H1 (cell line): ENCODE measurements at regions of chr17 and their contacts with region 1.

Region 1: GRCh38 chr17:78708510-78708973 is 73.5 kb downstream of the CYTH1 start:
- DNase-seq: peak; percentile 59 to 72
- H3K4me3 ChIP-seq: no peak overlapping the region
- H3K27ac ChIP-seq: no peak overlapping the region
- H3K4me1 ChIP-seq: no peaks in the 10 kb centered on the region
- H3K27me3 ChIP-seq: no peaks in the 10 kb centered on the region
- CTCF ChIP-seq: peak; percentile 92 to 96 (median 92)
- EP300 ChIP-seq: no peak
- POLR2A ChIP-seq: no peak
- RAD21 ChIP-seq: peak; percentile 98 to 99

Region 2: DNA sequence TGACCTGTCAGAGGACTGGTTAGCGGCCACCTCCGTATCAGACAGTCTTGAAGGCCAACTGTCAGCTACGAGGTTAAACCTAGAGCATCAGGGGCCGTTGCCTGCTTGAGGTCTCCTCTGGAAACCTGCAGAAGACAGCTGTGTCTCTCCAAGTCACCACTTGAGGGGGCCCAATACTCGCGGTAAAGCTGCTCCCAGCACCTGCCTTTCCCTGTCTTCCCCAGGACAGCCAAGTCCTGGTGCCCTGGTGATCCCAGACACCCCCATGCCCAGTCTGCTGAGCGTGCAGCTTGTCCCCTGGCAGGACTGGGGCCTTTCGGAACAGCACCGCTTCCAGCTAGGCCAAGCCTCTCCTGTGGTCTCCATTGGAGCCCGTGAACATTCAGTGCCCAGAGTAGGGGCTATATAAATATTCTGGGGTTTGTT is 211.4 kb before region 1 on chr17:
- CTCF ChIA-PET with region 1: interaction called, 92 read pairs
- POLR2A ChIA-PET with region 1: no interaction called
- DNase-seq: peak; percentile 57 to 85
- H3K4me3 ChIP-seq: no peak overlapping the region
- H3K27ac ChIP-seq: no peak overlapping the region
- H3K4me1 ChIP-seq: peaks cover 0 to 11% (median 9%) of the 10 kb centered on the region in 4 experiments; a peak in 6 of 7 replicates
- H3K27me3 ChIP-seq: no peaks in the 10 kb centered on the region; a peak in 2 of 7 replicates
- CTCF ChIP-seq: peak; percentile 80 to 95 (median 91)
- EP300 ChIP-seq: no peak
- POLR2A ChIP-seq: no peak
- RAD21 ChIP-seq: peak; percentile 99 to 100

Region 3: DNA sequence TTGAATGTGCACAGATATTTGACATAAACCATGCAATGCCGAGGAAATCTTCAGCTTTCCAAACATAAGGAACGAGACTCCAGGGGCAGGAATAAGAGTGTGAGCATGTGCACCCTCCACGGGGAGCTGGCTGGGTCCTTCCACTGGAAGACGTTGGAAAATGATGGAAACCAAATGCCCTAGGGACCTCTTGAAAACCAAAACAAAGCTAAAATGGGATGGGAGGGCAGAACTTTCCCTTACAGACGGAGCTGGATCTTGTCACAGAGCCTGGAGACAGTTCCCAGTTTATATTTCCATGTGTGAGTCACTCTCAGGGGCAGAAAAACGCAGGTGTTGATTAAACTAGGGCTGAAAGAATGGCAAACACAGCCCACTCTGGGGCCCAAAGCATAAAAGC is 96.9 kb before region 1 on chr17:
- CTCF ChIA-PET with region 1: interaction called, 26 read pairs
- POLR2A ChIA-PET with region 1: no interaction called
- DNase-seq: no peak
- H3K4me3 ChIP-seq: no peak overlapping the region
- H3K27ac ChIP-seq: no peak overlapping the region
- H3K4me1 ChIP-seq: peaks cover 0 to 6% (median 0%) of the 10 kb centered on the region in 4 experiments; a peak in 2 of 7 replicates
- H3K27me3 ChIP-seq: peaks cover 0 to 10% (median 8%) of the 10 kb centered on the region in 4 experiments; a peak in 5 of 7 replicates
- CTCF ChIP-seq: no peak
- EP300 ChIP-seq: no peak
- POLR2A ChIP-seq: no peak
- RAD21 ChIP-seq: no peak

Region 4: DNA sequence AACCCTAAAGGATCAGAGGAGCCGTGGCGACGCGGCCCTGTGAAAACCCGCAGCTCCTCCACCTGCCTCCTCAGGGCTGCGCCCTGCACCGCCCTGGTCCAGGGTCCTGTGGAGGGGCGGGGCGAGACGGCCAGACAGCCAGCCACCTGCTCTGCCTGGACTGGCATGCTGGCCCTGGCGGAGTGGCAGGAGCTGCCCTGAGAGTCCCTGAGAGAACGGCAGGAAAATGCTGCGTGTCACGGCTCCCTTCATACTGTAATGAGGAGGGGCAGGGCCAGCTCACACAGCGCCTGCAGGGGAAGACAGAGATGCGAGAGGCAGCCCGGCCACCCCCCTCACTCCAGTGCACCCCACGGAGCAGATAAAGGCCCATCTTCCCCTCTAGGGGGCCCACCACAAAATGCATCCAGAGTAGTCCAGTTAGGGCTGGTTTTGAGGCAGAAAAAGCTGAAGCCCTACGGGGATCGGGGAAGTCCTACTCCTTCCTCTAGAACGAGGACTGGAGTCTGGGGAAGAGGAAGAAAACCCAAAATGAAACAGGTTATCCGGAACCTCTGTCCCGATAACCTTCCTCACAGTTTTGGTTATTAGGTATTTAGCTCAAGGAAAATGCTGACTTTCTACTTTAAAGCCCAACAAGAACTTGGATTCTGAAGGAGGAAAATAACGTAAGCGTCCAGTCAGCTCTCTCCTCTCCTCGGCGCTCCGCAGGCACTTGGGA is 33.8 kb before region 1 on chr17:
- CTCF ChIA-PET with region 1: interaction called, 24 read pairs
- POLR2A ChIA-PET with region 1: interaction called, 4 read pairs
- DNase-seq: peak in 1 of 2 experiments; percentile 64
- H3K4me3 ChIP-seq: no peak overlapping the region
- H3K27ac ChIP-seq: no peak overlapping the region
- H3K4me1 ChIP-seq: no peaks in the 10 kb centered on the region
- H3K27me3 ChIP-seq: no peaks in the 10 kb centered on the region
- CTCF ChIP-seq: peak; percentile 24 to 31 (median 30); a peak in 3 of 4 replicates
- EP300 ChIP-seq: no peak
- POLR2A ChIP-seq: no peak
- RAD21 ChIP-seq: peak in 1 of 2 experiments; percentile 18; a peak in 1 of 4 replicates

Region 5: DNA sequence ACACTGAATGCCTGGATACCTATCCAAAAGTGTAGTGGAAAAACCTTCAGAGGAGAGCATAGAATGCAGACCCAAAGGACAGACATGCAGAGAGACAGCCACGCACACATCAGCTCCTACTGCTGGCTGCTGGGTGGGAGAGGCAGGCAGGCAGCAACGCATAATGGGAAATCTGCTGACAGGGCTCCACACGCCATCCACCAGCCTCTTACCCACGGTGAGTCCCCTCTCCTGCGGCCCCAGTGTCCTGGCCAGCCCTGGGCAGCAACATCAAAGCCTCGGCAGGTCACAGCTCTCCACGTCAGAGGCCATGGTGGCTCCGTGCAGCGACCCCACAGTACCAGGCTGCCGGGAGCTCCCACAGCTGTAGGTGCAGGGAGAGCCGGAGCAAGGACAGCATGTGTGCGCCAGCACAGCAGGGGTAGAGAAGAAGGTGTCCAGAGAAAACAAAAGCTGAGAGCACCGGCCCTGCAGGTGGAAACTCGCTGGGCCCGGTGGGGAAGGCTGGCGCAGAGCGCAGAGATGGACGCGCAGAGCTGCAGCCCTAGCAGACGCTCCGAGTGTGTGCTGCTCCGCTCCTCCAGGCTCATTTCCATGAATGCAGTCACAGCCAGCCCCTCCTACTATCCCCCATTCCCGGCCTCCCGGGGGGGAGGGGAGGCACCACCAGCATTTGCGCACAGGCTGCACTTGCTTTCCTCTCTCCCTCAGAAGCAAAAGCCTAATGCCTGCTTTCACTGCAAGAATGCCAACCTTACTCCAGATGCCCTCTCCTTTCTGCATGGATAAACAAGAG is 14.7 kb after region 1 on chr17:
- CTCF ChIA-PET with region 1: interaction called, 22 read pairs
- POLR2A ChIA-PET with region 1: interaction called, 5 read pairs
- DNase-seq: peak in 1 of 2 experiments; percentile 83
- H3K4me3 ChIP-seq: peak overlapping the region; percentile 40 to 62 (median 52); a peak in 7 of 8 replicates
- H3K27ac ChIP-seq: no peak overlapping the region
- H3K4me1 ChIP-seq: peaks cover 17 to 39% (median 25%) of the 10 kb centered on the region in 4 experiments
- H3K27me3 ChIP-seq: peaks cover 0 to 3% (median 0%) of the 10 kb centered on the region in 4 experiments; a peak in 1 of 7 replicates
- CTCF ChIP-seq: no peak
- EP300 ChIP-seq: no peak
- POLR2A ChIP-seq: 0 out of 3 replicates have a peak, but pooled peaks of 1 of the 2 experiments have one; percentile 39
- RAD21 ChIP-seq: no peak